Common myeloid progenitor, CD34-positive (primary cell): ENCODE measurements at regions of chr3 and their contacts with region 1.

Region 1: GRCh38 chr3:157122116-157122515 is 37.8 kb downstream of the CCNL1 start:
- DNase-seq: peak in 1 of 3 donors; percentile 35
- H3K4me3 ChIP-seq: no peak overlapping the region
- H3K27ac ChIP-seq: no peak overlapping the region
- H3K4me1 ChIP-seq: peaks cover 0 to 4% (median 1%) of the 10 kb centered on the region in 4 experiments
- H3K27me3 ChIP-seq: peaks cover 0 to 35% (median 8%) of the 10 kb centered on the region in 5 experiments

Region 2: GRCh38 chr3:157148196-157148889 is 26.2 kb after region 1 on chr3:
- CTCF ChIA-PET with region 1: no interaction called
- POLR2A ChIA-PET with region 1: interaction called, 10 read pairs
- DNase-seq: no peak
- H3K4me3 ChIP-seq: no peak overlapping the region
- H3K27ac ChIP-seq: no peak overlapping the region
- H3K4me1 ChIP-seq: no peaks in the 10 kb centered on the region
- H3K27me3 ChIP-seq: no peaks in the 10 kb centered on the region